IMR-90 (cell line): ENCODE measurements at regions of chr4 and their contacts with region 1.

Region 1: DNA sequence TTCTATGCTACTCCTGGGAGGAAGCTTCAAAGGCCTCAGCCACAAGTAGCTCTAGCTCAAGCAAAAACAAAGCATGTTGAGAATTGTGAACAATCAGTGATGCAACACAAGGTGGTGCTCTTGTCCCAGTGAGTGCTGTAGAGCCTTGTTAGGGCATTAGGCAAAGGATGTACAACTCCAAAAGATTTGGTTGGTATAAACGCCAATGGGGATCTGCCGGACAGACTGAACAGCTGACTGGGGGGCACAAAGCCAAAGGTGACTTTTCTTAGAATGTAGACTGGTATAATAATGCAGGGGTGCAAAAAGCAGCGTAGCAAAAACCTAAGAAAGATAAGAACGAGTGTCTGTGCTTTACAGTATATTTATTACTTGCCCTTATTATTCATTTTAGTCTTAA is 62.6 kb upstream of the ALB start:
- DNase-seq: peak; percentile 53
- ATAC-seq: peak; percentile 89
- H3K4me3 ChIP-seq: no peak overlapping the region
- H3K27ac ChIP-seq: no peak overlapping the region
- H3K4me1 ChIP-seq: no peaks in the 10 kb centered on the region
- H3K27me3 ChIP-seq: no peaks in the 10 kb centered on the region; the same call in none of the 2 replicates
- CTCF ChIP-seq: peak; percentile 51
- POLR2A ChIP-seq: no peak
- RAD21 ChIP-seq: peak; percentile 70

Region 2: GRCh38 chr4:73139991-73140390 is 201.5 kb before region 1 on chr4:
- CTCF ChIA-PET with region 1: no interaction called
- POLR2A ChIA-PET with region 1: no interaction called
- dilution Hi-C with region 1: no loop called
- in situ Hi-C with region 1: no loop called
- intact Hi-C with region 1: no loop called
- DNase-seq: peak; percentile 31
- ATAC-seq: peak; percentile 63
- H3K4me3 ChIP-seq: no peak overlapping the region
- H3K27ac ChIP-seq: no peak overlapping the region
- H3K4me1 ChIP-seq: no peaks in the 10 kb centered on the region
- H3K27me3 ChIP-seq: no peaks in the 10 kb centered on the region
- CTCF ChIP-seq: no peak
- POLR2A ChIP-seq: no peak
- RAD21 ChIP-seq: no peak

Region 3: GRCh38 chr4:73419106-73420038 is 77.9 kb after region 1 on chr4:
- CTCF ChIA-PET with region 1: no interaction called
- POLR2A ChIA-PET with region 1: no interaction called
- dilution Hi-C with region 1: no loop called
- in situ Hi-C with region 1: no loop called
- intact Hi-C with region 1: no loop called
- DNase-seq: no peak
- ATAC-seq: no peak
- H3K4me3 ChIP-seq: no peak overlapping the region
- H3K27ac ChIP-seq: no peak overlapping the region
- H3K4me1 ChIP-seq: no peaks in the 10 kb centered on the region
- H3K27me3 ChIP-seq: no peaks in the 10 kb centered on the region
- CTCF ChIP-seq: no peak
- POLR2A ChIP-seq: no peak
- RAD21 ChIP-seq: no peak

Region 4: DNA sequence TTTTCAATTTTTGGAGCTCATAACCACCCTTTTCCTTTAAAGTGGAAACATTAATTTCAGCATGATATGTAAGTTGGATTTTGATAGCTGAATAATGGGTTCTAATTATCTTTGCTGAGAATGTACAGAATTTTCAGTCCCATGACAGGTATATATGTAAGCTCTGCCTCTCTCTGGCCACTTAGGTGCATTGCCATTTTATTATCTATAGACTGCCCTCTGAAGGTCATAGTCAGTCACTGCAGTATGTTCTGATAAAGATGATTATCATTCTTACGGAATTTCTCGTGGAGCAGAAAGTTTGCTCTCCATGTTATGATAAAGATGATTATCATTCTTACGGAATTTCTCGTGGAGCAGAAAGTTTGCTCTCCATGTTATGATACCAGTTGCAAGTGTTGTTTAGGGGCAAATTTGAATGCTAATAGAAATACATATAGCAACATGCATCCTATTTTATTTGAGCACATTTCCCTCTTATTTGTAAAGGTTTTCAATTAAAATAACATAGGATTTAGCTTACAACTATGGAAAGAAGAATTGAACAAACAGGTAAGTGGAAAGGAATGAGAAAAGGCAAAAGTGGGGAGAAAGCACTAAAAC is 105.0 kb after region 1 on chr4:
- CTCF ChIA-PET with region 1: interaction called, 3 read pairs
- POLR2A ChIA-PET with region 1: no interaction called
- dilution Hi-C with region 1: no loop called
- in situ Hi-C with region 1: no loop called
- intact Hi-C with region 1: loop called (anchors 5 kb)
- DNase-seq: peak; percentile 63
- ATAC-seq: peak; percentile 84
- H3K4me3 ChIP-seq: no peak overlapping the region
- H3K27ac ChIP-seq: no peak overlapping the region
- H3K4me1 ChIP-seq: peaks cover 3% of the 10 kb centered on the region
- H3K27me3 ChIP-seq: peaks cover 2% of the 10 kb centered on the region; the same call in 1 of the 2 replicates
- CTCF ChIP-seq: peak; percentile 92
- POLR2A ChIP-seq: no peak
- RAD21 ChIP-seq: peak; percentile 58

Region 5: DNA sequence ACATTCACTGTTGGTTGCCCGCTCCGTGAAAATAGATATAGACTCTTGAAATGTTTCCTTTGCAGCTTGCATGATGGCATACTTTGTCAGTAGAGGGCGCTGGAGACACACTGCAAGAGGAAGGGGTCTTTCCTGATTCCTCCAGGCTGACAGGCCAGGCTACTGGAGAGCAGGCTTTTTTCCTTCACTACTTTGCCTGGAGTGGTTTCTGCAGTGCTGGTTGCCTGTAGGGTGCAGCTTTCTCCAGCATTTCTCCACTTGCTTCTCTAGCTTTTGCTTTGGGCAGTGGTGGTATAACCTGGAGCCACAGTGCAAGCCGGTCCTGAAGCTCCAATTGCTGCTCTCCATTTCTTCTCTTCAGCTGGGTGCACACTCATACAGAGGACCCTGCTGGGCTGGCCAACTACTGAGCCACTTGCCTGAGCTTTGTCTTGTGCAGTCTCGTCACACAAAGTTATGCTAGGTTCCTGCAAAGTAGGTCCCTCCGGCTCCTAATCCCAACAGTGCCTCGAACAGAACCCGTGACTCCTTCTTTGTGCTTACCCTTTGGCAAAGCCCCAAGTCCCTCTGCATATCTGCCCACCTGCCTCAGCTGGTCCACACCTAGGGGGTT is 232.4 kb after region 1 on chr4:
- CTCF ChIA-PET with region 1: no interaction called
- POLR2A ChIA-PET with region 1: no interaction called
- dilution Hi-C with region 1: no loop called
- in situ Hi-C with region 1: no loop called
- intact Hi-C with region 1: loop called (anchors 10 kb)
- DNase-seq: peak; percentile 82
- ATAC-seq: peak; percentile 98
- H3K4me3 ChIP-seq: no peak overlapping the region
- H3K27ac ChIP-seq: no peak overlapping the region
- H3K4me1 ChIP-seq: no peaks in the 10 kb centered on the region
- H3K27me3 ChIP-seq: peaks cover 2% of the 10 kb centered on the region; the same call in 1 of the 2 replicates
- CTCF ChIP-seq: peak; percentile 88
- POLR2A ChIP-seq: no peak
- RAD21 ChIP-seq: peak; percentile 80

Region 6: DNA sequence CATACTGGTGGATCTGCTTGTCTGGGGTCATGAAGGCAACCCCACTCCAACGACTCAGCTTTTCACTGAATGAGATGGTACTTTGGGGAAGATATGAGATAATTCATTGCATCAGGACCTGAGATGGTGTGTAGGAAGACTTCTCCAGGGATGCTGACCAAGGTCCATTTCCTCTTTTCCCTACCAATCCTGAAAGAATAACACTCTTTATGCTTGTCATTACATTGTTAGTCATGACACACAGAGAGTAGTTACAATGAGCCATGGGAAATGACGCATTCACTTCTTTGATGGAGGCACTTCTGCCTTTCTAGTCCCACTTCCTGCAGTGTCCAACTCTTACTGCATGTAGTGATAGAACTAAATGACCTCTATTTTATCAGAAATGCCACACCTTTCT is 1162.1 kb after region 1 on chr4:
- CTCF ChIA-PET with region 1: interaction called, 10 read pairs
- POLR2A ChIA-PET with region 1: no interaction called
- dilution Hi-C with region 1: no loop called
- in situ Hi-C with region 1: no loop called
- intact Hi-C with region 1: no loop called
- DNase-seq: peak; percentile 88
- ATAC-seq: no peak
- H3K4me3 ChIP-seq: no peak overlapping the region
- H3K27ac ChIP-seq: peak overlapping the region; percentile 57
- H3K4me1 ChIP-seq: peaks cover 26% of the 10 kb centered on the region
- H3K27me3 ChIP-seq: no peaks in the 10 kb centered on the region
- CTCF ChIP-seq: no peak
- POLR2A ChIP-seq: no peak
- RAD21 ChIP-seq: no peak